ENCODE measurements at regions of chr2 and their contacts with region 1.

Region 1: GRCh38 chr2:240595496-240596470 is 9.2 kb downstream of the CAPN10 start:
- DNase-seq: no peak
- ATAC-seq: peak; percentile 9 to 49 (median 22)
- H3K4me3 ChIP-seq: peak overlapping the region in 1 of 10 donors; percentile 3
- H3K27ac ChIP-seq: peak overlapping the region in 9 of 10 donors; percentile 14 to 79 (median 67)
- H3K4me1 ChIP-seq: peaks cover 3 to 46% (median 20%) of the 10 kb centered on the region in 9 donors
- H3K27me3 ChIP-seq: no peaks in the 10 kb centered on the region
- CTCF ChIP-seq: peak in 5 of 9 donors; percentile 29 to 44 (median 42)

Region 2: GRCh38 chr2:240560480-240561326 is 35.1 kb before region 1 on chr2:
- intact Hi-C with region 1: loop called in 1 of 10 experiments (anchors 5 kb)
- DNase-seq: peak; percentile 100
- ATAC-seq: peak; percentile 85 to 96 (median 92)
- H3K4me3 ChIP-seq: peak overlapping the region; percentile 69 to 97 (median 86)
- H3K27ac ChIP-seq: peak overlapping the region; percentile 96 to 100 (median 99)
- H3K4me1 ChIP-seq: peaks cover 9 to 81% (median 48%) of the 10 kb centered on the region in 9 donors
- H3K27me3 ChIP-seq: no peaks in the 10 kb centered on the region
- CTCF ChIP-seq: peak in 8 of 9 donors; percentile 10 to 56 (median 38)